ENCODE measurements at regions of chr6 and their contacts with region 1.

Region 1: GRCh38 chr6:158853072-158853871 is 34.1 kb upstream of the EZR start:
- DNase-seq: peak; percentile 94
- ATAC-seq: peak; percentile 83
- H3K4me3 Mint-ChIP-seq: no peak overlapping the region
- H3K27ac Mint-ChIP-seq: no peak overlapping the region
- H3K4me1 Mint-ChIP-seq: peaks cover 29% of the 10 kb centered on the region
- H3K27me3 Mint-ChIP-seq: no peaks in the 10 kb centered on the region

Region 2: DNA sequence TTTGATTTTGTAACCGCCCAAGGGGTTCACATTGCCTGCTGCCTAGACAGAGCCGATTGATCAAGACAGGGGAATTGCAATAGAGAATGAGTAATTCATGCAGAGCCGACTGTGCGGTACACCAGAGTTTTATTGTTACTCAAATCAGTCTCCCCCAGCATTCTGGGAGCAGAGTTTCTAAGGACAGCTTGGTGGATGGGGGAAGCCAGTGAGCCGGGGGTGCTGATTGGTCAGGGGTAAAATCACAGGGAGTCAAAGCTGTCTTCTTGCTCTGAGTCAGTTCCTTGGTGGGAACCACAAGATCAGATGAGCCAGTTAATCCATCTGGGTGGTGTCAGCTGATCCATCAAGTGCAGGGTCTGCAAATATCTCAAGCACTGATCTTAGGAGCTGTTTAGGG is 25.9 kb after region 1 on chr6:
- CTCF ChIA-PET with region 1: no interaction called
- POLR2A ChIA-PET with region 1: no interaction called
- intact Hi-C with region 1: loop called in 1 of 2 experiments (anchors 1 kb)
- DNase-seq: peak; percentile 85
- ATAC-seq: peak; percentile 97
- H3K4me3 Mint-ChIP-seq: no peak overlapping the region
- H3K27ac Mint-ChIP-seq: peak overlapping the region; percentile 71
- H3K4me1 Mint-ChIP-seq: peaks cover 18% of the 10 kb centered on the region
- H3K27me3 Mint-ChIP-seq: no peaks in the 10 kb centered on the region

Region 3: DNA sequence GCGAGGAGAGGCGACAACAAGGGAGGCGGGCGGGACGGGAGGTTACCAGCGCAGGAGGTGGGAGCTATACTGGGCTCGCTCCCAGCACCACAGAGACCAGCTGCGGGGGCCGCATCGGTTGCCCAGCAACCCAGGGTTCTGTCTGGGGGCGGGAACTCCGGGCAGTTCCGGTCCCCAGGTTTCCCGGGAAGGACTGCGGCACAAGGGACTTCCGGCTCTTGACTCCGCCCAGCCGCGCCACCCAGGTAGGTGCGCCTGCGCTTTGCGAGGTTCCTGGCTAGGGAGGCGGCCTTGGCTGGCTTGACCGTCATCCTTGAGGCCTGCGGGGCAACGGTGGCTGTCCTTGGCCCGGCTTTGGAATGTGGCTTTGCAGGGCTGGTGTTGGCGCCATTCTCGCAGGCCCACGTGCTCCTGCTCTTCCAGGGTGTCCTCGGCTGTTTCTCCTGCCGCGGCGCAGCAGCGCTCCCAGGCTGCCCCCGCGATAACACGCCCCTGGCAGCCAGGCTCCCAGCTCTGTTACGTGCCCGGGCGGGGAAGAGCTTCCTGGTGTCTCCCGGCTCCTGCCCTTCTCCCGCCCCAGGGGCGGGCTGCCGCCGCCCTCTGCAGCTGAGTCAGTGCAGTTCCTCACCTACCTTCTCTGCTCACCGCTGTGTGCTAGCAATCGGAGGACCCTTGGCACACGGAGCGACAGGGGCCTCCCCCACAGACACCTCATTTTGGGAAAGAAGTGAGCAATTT is 146.6 kb after region 1 on chr6 and contains the start of gene RSPH3:
- CTCF ChIA-PET with region 1: no interaction called
- POLR2A ChIA-PET with region 1: no interaction called
- intact Hi-C with region 1: loop called in 1 of 2 experiments (anchors 5 kb)
- DNase-seq: peak; percentile 97
- ATAC-seq: peak; percentile 86
- H3K4me3 Mint-ChIP-seq: peak within 1 kb of the TSS; percentile 82
- H3K27ac Mint-ChIP-seq: peak within 1 kb of the TSS; percentile 66
- H3K4me1 Mint-ChIP-seq: peaks cover 46% of the 10 kb centered on the region
- H3K27me3 Mint-ChIP-seq: no peaks in the 10 kb centered on the region
- total RNA-seq, gene RSPH3: 6.5 to 9.3 TPM